K562 (cell line): ENCODE measurements at regions of chr17 and their contacts with region 1.

Region 1: DNA sequence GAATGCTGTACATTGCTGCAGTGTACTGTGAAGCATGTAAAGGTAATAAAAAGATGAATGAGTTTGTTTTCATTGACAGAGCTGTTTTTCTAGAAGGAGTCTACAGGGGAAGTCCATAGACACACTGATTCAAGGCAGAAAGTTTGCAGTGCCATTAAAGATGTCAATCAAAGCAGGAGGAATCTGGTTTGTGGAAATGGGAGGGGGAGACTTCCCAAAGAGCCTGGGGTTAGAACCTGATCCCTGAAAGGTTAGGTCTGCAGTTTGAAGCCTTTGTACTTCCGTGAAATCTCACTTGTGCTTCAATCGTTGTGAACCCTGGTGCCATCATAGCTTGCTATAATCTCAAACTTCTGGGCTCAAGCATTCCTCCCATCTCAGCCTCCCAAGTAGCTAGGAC is 5.2 kb downstream of the ACSF2 start:
- DNase-seq: no peak
- ATAC-seq: no peak
- H3K4me3 ChIP-seq: no peak overlapping the region
- H3K27ac ChIP-seq: no peak overlapping the region
- H3K4me1 ChIP-seq: peaks cover 8 to 14% of the 10 kb centered on the region in 2 experiments; a peak in 4 of 5 replicates
- H3K27me3 ChIP-seq: no peaks in the 10 kb centered on the region
- CTCF ChIP-seq: no peak
- EP300 ChIP-seq: no peak
- POLR2A ChIP-seq: no peak
- RAD21 ChIP-seq: no peak

Region 2: DNA sequence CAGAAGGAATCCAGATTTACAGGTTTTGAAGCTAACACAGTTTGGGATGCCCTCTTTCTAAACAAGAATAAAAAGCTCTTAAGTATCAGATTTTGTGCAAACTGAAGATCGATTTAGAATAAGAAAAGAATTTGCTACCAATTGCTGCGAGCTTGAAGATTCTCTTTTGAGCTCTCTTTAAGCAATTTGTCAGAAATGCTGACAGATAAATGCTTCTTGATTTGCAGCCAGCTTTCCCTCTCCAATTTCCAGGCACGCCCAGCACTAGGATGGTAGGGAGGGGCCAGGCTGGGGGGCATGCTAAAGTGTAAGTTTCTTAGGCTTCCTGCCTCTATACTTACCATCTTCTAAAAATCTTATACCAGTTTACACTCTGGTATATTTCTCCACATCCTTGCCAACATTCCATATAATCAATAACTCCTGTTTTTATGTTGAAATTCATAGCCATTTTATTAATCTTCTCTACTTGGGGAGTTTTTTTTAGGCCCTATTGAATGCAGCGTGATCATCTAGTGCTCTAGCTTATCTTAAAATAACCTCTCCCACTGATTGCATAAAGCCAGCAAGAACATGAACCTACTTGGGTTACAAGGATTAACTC is 12.2 kb after region 1 on chr17:
- CTCF ChIA-PET with region 1: no interaction called
- POLR2A ChIA-PET with region 1: interaction called, 10 read pairs
- in situ Hi-C with region 1: no loop called
- intact Hi-C with region 1: no loop called
- DNase-seq: peak in 2 of 4 experiments; percentile 17 to 51
- ATAC-seq: peak; percentile 77
- H3K4me3 ChIP-seq: no peak overlapping the region
- H3K27ac ChIP-seq: no peak overlapping the region
- H3K4me1 ChIP-seq: peaks cover 15 to 26% of the 10 kb centered on the region in 2 experiments
- H3K27me3 ChIP-seq: no peaks in the 10 kb centered on the region; a peak in 1 of 5 replicates
- CTCF ChIP-seq: no peak
- EP300 ChIP-seq: no peak
- POLR2A ChIP-seq: no peak
- RAD21 ChIP-seq: no peak